CD8-positive, alpha-beta memory T cell (primary cell): ENCODE measurements at regions of chr4 and their contacts with region 1.

Region 1: DNA sequence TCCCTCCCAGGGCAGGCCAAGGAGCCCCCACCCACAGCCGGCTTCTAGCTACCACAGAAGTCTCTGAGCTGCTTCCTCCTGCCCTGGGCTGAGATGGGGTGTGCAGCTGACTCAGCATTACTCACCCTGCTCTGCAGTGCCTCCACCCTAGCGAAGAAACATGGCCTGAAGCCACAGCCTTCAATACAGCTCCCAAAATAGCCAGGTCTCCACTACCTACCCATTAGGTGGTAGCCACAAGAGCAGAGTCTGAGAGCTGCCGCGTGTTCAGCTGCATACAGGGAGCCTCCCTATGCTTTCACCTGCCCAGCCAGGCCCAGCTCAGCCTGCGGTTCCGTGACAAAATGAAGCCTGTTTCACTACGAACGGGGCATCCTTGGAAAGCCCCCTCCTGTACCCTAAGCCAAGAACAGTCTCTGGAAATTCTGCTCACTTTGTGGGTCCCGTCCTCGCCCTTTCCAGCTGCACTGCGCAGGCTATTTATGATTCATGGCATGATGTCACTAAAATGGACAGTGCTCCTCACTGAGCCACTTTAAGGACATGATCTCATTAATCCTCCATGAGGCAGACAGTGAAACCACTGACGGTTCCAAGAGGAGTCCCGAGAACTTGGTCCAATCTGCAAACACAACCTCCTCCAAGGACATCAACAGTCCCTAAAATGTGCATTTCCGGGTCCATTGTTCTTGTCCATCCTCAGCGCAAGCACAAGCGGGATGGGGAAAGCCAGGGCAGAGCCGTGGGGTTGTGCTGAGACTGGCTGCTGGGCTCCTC is 20.2 kb downstream of the WDR1 start:
- DNase-seq: peak; percentile 61 to 89 (median 71)
- H3K4me3 ChIP-seq: no peak overlapping the region
- H3K4me3 Mint-ChIP-seq: peak overlapping the region; percentile 35 to 62 (median 50)
- H3K27ac ChIP-seq: peak overlapping the region; percentile 8
- H3K27ac Mint-ChIP-seq: peak overlapping the region; percentile 89 to 99 (median 94)
- H3K4me1 ChIP-seq: peaks cover 88% of the 10 kb centered on the region
- H3K4me1 Mint-ChIP-seq: peaks cover 89 to 98% (median 95%) of the 10 kb centered on the region in 3 donors
- H3K27me3 ChIP-seq: no peaks in the 10 kb centered on the region
- H3K27me3 Mint-ChIP-seq: no peaks in the 10 kb centered on the region

Region 2: DNA sequence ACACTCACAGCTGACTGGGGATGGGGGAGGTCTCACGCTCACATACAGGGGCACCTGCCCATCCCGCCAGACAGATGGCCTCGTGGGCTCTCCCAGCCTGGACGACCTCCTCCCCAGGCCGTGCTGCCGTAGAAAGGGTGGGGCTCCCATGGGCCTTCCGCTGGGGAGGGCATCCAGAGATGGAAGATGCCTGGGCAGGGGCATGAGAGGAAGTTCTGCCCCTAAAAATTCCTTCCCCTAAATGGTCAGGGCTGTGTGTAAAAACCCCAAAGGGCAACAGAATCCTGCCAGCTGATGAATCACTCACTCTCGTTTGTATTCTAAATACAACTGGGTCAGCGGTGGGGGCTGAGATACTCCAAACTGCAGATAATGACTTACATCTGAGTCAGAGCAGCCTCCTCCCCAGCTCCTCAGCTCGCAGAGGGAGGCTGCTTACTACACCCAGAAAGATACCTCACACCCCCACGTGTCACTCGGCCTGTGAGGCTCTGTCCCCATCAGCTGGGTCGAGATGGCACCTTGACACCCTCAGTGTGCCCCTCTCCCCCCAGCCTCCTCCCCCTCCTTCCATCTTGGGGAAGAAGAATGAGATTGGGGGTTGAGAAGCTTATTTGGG is 10.1 kb after region 1 on chr4:
- CTCF ChIA-PET with region 1: interaction called, 14 read pairs
- POLR2A ChIA-PET with region 1: interaction called, 10 read pairs
- DNase-seq: peak in 4 of 5 donors; percentile 50 to 84 (median 63)
- H3K4me3 ChIP-seq: peak overlapping the region; percentile 38
- H3K4me3 Mint-ChIP-seq: peak overlapping the region; percentile 16 to 76 (median 67)
- H3K27ac ChIP-seq: peak overlapping the region; percentile 45
- H3K27ac Mint-ChIP-seq: peak overlapping the region; percentile 88 to 99 (median 94)
- H3K4me1 ChIP-seq: peaks cover 100% of the 10 kb centered on the region
- H3K4me1 Mint-ChIP-seq: peaks cover 95 to 100% (median 98%) of the 10 kb centered on the region in 3 donors
- H3K27me3 ChIP-seq: no peaks in the 10 kb centered on the region
- H3K27me3 Mint-ChIP-seq: no peaks in the 10 kb centered on the region

Region 3: DNA sequence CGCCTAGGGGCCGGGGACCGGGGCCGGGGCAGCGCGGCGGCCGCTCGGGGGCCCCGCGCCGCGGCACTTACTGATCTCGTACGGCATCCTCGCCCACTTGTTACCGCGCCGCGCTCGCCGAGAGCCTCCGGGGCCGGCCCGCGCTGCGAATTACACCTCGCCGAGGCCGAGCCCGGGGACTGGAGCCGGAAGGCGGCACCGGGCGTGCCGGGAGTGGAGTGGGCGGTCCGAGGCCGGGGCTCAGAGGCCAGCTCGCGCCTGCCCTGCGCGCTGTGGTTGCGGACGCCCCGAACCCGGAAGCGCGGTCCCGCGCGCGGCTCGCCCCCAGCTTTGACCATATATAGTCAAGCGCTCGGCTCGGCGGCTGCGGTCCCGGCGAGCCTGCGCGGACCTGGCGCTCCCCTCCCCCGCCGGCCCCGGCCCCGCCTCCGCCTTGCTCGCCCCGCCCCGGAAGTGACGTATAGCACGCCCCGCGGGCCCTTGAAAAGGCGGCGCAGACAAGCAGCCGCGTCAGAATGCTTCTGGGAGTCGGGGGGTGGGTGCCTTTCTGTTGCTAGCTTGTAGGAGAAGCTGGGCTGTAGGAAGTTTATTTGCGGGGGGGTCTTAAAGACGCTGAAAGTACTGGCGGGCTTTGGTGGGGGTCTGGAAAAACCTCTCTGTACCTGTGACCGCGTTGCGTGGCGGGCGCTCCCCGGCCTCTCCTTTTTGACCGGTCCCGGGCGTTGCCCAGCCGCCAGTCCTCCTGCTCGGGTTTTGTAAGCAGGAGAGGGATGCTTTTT is 20.4 kb after region 1 on chr4 and contains the start of gene WDR1:
- CTCF ChIA-PET with region 1: interaction called, 7 read pairs
- POLR2A ChIA-PET with region 1: interaction called, 21 read pairs
- DNase-seq: peak; percentile 88 to 95 (median 91)
- H3K4me3 ChIP-seq: peak within 1 kb of the TSS; percentile 81
- H3K4me3 Mint-ChIP-seq: peak within 1 kb of the TSS; percentile 93 to 99 (median 96)
- H3K27ac ChIP-seq: peak within 1 kb of the TSS; percentile 90
- H3K27ac Mint-ChIP-seq: peak within 1 kb of the TSS; percentile 96 to 100 (median 98)
- H3K4me1 ChIP-seq: peaks cover 78% of the 10 kb centered on the region
- H3K4me1 Mint-ChIP-seq: peaks cover 53 to 60% (median 59%) of the 10 kb centered on the region in 3 donors
- H3K27me3 ChIP-seq: no peaks in the 10 kb centered on the region
- H3K27me3 Mint-ChIP-seq: no peaks in the 10 kb centered on the region
- total RNA-seq, gene WDR1: 409 TPM

Region 4: DNA sequence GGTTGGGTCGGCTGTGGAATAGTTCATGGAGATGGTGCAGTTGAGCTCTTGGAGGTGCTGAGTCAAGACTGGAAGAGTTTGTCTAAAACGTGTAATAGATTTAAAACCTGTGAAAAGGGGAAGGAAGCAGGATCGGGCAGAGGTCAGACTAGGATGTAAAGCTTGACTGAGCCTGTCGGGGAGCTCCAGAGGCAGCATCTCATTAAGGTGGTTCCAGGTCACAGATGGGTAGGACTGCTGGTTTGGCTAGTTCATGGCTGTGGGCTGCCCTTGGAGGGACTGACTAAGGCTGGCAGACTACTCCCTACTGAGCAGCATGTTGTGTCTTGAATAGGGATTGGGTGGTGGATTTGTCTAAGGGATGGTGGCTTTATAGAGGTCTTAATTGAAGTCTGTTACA is 48.6 kb after region 1 on chr4:
- CTCF ChIA-PET with region 1: no interaction called
- POLR2A ChIA-PET with region 1: no interaction called
- DNase-seq: no peak
- H3K4me3 ChIP-seq: no peak overlapping the region
- H3K4me3 Mint-ChIP-seq: no peak overlapping the region
- H3K27ac ChIP-seq: no peak overlapping the region
- H3K27ac Mint-ChIP-seq: no peak overlapping the region
- H3K4me1 ChIP-seq: no peaks in the 10 kb centered on the region
- H3K4me1 Mint-ChIP-seq: no peaks in the 10 kb centered on the region
- H3K27me3 ChIP-seq: no peaks in the 10 kb centered on the region
- H3K27me3 Mint-ChIP-seq: peaks cover 0 to 8% of the 10 kb centered on the region in 2 donors

Region 5: DNA sequence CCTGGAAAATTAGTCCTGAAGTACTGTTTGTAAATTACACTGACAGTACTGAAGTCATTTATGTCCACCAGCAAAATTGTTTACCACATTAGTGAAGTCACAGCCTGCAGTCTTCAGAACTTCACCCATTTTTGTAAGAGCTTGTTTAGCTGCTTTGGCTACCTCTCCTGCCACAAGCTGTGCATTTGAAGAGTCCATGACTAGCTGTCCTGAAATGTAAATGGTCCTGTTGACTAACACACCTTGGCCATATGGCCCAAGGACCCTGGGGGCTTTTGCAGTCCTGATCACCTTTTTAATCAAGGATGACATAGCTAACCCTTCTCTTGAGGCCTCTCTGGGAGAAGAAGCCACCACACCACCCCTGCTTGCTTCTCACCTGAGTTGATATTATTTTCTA is 382.2 kb after region 1 on chr4:
- CTCF ChIA-PET with region 1: no interaction called
- POLR2A ChIA-PET with region 1: no interaction called
- DNase-seq: no peak
- H3K4me3 ChIP-seq: no peak overlapping the region
- H3K4me3 Mint-ChIP-seq: no peak overlapping the region
- H3K27ac ChIP-seq: no peak overlapping the region
- H3K27ac Mint-ChIP-seq: no peak overlapping the region
- H3K4me1 ChIP-seq: no peaks in the 10 kb centered on the region
- H3K4me1 Mint-ChIP-seq: no peaks in the 10 kb centered on the region
- H3K27me3 ChIP-seq: no peaks in the 10 kb centered on the region
- H3K27me3 Mint-ChIP-seq: peaks cover 10 to 25% of the 10 kb centered on the region in 2 donors